H1 (cell line): ENCODE measurements at regions of chr19 and their contacts with region 1.

Region 1: GRCh38 chr19:49106648-49107135 is 7.5 kb upstream of the LIN7B start:
- DNase-seq: peak in 1 of 2 experiments; percentile 87
- H3K4me3 ChIP-seq: no peak overlapping the region
- H3K27ac ChIP-seq: no peak overlapping the region
- H3K4me1 ChIP-seq: no peaks in the 10 kb centered on the region
- H3K27me3 ChIP-seq: no peaks in the 10 kb centered on the region
- CTCF ChIP-seq: peak; percentile 76 to 98 (median 97)
- EP300 ChIP-seq: no peak
- POLR2A ChIP-seq: no peak
- RAD21 ChIP-seq: peak; percentile 29 to 60; a peak in 3 of 4 replicates

Region 2: DNA sequence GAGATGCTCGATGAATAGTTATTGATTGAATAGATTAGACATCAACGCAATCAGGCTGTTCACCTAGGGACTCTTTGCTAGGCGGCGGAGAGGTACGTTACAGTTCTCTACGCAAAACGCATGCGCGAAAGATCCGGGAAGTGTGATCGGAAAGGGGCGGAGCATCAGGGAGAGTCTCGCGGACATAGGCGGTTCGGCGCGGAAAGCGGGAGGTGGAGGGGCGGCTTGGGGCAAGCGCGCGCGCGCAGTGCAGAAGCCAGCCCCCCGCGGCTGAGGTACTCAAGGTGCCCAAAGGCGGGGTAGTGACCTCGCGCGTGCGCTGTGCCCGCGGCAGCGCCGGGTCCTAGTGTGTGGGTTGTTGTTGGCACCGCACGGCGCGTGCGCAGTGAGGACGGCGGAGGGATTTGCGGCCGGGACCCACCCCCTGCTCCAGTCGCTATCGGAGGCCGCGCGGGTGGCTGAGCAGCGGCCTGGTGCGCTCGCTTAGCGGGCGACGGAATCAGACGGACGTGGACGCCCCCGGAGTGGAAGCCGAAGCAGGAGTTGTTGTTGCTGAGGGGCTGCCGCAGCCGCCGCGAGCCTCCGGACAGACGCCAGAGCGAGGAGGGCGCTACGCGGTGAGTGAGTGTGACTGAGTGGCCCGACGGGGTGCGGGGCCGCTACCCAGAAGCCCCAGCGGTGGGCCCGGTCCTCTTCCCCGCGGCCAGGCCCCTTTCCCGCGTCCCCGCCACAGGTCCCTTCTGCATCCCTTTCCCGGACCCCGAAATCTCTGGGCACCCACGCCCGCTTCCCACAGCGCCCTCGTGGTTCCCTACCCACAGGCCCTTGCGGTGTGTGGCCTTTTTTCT is 21.4 kb before region 1 on chr19 and contains the start of gene SNRNP70:
- CTCF ChIA-PET with region 1: interaction called, 5 read pairs
- POLR2A ChIA-PET with region 1: interaction called, 21 read pairs
- DNase-seq: peak; percentile 98 to 99
- H3K4me3 ChIP-seq: peak within 1 kb of the TSS; percentile 84 to 97 (median 90)
- H3K27ac ChIP-seq: peak within 1 kb of the TSS; percentile 94
- H3K4me1 ChIP-seq: peaks cover 4 to 6% (median 5%) of the 10 kb centered on the region in 4 experiments
- H3K27me3 ChIP-seq: peaks cover 0 to 3% (median 0%) of the 10 kb centered on the region in 4 experiments; a peak in 1 of 7 replicates
- CTCF ChIP-seq: 0 out of 4 replicates have a peak, but pooled peaks of 1 of the 3 experiments have one; percentile 3
- EP300 ChIP-seq: no peak; a peak in 1 of 3 replicates
- POLR2A ChIP-seq: peak; percentile 97 to 98
- RAD21 ChIP-seq: no peak
- total RNA-seq, gene SNRNP70: 231 and 244 TPM in 2 replicates

Region 3: GRCh38 chr19:49118565-49119410 is 12.1 kb after region 1 on chr19 and contains the start of gene C19orf73:
- CTCF ChIA-PET with region 1: interaction called, 16 read pairs
- POLR2A ChIA-PET with region 1: interaction called, 8 read pairs
- DNase-seq: peak in 1 of 2 experiments; percentile 94
- H3K4me3 ChIP-seq: peak within 1 kb of the TSS; percentile 64 to 86 (median 78)
- H3K27ac ChIP-seq: peak within 1 kb of the TSS; percentile 57; the same call in 1 of the 2 replicates
- H3K4me1 ChIP-seq: peaks cover 0 to 5% (median 4%) of the 10 kb centered on the region in 4 experiments; a peak in 4 of 7 replicates
- H3K27me3 ChIP-seq: peaks cover 8 to 19% (median 17%) of the 10 kb centered on the region in 4 experiments
- CTCF ChIP-seq: peak in 1 of 3 experiments; percentile 5; a peak in 1 of 4 replicates
- EP300 ChIP-seq: peak in 1 of 2 experiments; percentile 76; a peak in 1 of 3 replicates
- POLR2A ChIP-seq: peak in 1 of 2 experiments; percentile 24; a peak in 1 of 3 replicates
- RAD21 ChIP-seq: no peak; a peak in 1 of 4 replicates
- total RNA-seq, gene C19orf73: 1.2 and 2.5 TPM in 2 replicates

Region 4: DNA sequence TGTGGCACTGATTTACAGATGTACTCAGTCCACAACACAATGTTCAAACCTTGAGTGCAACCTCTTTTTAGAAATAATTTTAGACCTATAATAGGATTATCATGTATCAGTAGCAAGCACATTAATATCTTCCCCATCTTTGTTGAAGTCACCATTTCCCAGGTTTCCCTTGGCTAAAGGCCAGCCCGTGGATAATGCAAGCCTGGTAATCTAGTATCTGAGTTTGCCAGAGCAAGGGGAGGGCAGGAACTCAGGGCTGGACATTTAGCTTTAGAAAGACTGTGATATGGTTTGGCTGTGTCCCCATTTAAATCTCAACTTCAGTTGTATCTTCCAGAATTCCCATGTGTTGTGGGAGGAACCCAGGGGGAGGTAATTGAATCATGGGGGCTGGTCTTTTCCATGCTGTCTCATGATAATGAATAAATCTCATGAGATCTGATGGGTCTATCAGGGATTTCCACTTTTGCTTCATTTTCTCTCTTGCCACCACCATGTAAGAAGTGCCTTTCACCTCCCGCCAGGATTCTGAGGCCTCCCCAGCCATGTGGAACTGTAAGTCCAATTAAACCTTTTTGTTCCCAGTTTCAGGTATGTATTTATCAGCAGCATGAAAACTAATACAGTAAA is 180.6 kb after region 1 on chr19:
- CTCF ChIA-PET with region 1: no interaction called
- POLR2A ChIA-PET with region 1: no interaction called
- DNase-seq: no peak
- H3K4me3 ChIP-seq: no peak overlapping the region
- H3K27ac ChIP-seq: no peak overlapping the region
- H3K4me1 ChIP-seq: no peaks in the 10 kb centered on the region
- H3K27me3 ChIP-seq: no peaks in the 10 kb centered on the region
- CTCF ChIP-seq: no peak
- EP300 ChIP-seq: no peak
- POLR2A ChIP-seq: no peak
- RAD21 ChIP-seq: no peak